ENCODE measurements at regions of chr2 and their contacts with region 1.

Region 1: DNA sequence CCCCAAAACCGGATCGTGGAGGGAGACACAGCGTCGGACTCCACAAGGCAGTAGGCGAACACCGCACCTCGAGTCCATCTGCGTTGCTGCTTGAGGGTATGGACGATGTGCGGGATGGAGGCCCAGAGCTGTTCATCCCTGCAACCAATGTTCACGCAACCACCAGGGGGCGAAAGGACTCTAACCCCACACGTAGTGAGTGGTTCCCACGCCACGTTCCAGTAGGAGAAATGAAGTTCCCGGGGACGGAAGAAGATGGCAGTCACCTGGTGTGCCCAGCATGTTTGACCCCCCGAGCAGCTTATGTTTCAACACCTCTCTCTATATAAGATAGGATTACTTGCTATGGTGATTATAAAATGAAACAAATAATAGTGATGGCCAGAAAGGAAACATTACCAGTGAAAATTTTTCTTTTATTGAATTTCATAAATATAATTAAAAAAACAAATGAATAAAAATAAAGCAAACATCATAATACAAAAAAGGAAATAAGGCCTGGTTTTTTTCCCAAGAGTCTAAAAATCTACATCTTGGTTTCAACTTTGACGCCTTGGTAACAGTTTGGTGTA is 184.3 kb downstream of the SH3BP4 start:
- DNase-seq: peak; percentile 70 to 89 (median 82)
- ATAC-seq: peak; percentile 90 to 99 (median 97)
- H3K4me3 ChIP-seq: no peak overlapping the region
- H3K27ac ChIP-seq: no peak overlapping the region
- H3K4me1 ChIP-seq: no peaks in the 10 kb centered on the region
- H3K27me3 ChIP-seq: no peaks in the 10 kb centered on the region
- CTCF ChIP-seq: peak; percentile 70 to 78 (median 72)

Region 2: DNA sequence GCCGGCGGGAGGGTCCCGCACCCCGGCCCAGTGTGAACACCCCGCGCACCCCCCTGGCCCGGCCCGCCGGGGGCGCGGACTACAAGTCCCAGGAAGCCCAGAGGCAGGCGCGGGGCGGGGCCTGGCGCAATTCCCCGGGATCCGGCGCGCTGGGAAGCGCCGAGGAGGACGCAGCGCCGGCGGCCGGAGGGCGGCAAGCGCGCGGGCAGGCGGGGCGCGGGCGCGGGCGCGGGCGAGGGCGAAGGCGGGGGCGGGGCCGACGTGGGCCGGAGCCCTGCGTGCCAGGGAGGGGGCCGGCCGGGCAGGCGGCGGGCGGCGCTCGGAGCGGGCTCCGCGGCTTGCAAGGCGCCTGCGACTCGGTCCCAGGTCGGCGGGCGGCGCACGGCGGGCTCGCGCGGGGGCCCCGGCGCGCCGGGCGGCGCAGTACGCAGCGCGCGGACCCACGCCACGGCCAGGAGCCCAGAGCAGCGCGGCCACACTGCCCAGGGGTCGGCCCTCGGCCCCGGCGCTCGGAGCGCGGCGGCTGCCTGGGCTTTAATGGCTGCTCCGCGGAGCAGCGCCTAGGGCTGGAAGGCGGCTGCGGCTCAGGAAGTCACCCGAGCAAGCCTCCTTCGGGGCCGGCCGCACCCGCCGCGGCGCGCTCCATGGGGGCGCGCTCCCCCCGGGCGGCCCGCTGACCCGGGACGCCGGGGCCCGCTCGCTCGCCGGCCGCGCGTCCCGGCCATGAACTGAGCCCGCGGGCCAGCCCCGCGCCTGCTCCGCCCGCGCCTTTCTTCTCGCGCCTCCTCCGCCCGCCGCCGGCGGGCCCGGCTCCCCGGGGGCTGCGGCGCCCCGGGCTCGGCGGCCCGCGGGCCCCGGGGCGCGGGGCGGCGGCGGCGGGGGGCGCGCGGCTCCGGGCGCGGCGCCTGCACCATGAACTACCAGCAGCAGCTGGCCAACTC is 358.0 kb after region 1 on chr2 and contains the start of gene AGAP1:
- intact Hi-C with region 1: loop called in 1 of 3 experiments (anchors 10 kb)
- DNase-seq: peak; percentile 89 to 97 (median 95)
- ATAC-seq: peak; percentile 82 to 89 (median 85)
- H3K4me3 ChIP-seq: peak within 1 kb of the TSS; percentile 53 to 67 (median 66)
- H3K27ac ChIP-seq: peak within 1 kb of the TSS; percentile 37 to 83 (median 80)
- H3K4me1 ChIP-seq: no peaks in the 10 kb centered on the region
- H3K27me3 ChIP-seq: no peaks in the 10 kb centered on the region
- CTCF ChIP-seq: no peak
- total RNA-seq, gene AGAP1: 16.1 to 27.6 (median 19.4) TPM

Region 3: DNA sequence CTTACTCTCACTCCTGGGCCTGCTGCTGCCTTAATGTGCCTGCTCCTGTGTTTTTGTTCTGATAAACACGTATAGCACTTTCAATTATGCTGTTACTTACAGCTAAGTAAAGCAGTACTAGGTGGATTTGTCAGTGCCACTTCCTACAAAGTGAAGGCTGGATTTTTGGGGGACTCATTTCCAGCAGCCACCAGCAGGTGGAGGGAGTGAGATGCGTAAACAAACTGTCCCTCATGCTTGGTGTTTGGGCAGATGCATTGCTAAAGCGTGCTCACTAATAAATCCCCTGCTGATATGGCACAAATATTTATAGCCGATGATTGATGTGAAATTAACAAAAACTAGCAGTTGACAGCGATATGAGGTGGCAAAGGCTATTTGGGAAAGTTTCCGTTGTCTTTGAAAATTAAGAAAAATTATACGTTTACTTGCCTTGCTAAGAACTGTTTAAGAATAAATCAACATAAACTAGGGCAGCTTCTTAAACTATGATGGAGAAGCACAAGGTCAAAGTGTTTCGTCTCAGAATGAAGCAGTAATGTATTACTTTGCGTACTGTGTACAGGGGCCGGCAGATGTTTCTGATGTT is 459.4 kb after region 1 on chr2:
- intact Hi-C with region 1: loop called in 2 of 3 experiments (anchors 5 to 10 kb)
- DNase-seq: peak in 4 of 6 donors; percentile 31 to 74 (median 50)
- ATAC-seq: peak; percentile 42 to 80 (median 78)
- H3K4me3 ChIP-seq: no peak overlapping the region
- H3K27ac ChIP-seq: no peak overlapping the region
- H3K4me1 ChIP-seq: no peaks in the 10 kb centered on the region
- H3K27me3 ChIP-seq: no peaks in the 10 kb centered on the region
- CTCF ChIP-seq: peak; percentile 54 to 80 (median 60)

Region 4: DNA sequence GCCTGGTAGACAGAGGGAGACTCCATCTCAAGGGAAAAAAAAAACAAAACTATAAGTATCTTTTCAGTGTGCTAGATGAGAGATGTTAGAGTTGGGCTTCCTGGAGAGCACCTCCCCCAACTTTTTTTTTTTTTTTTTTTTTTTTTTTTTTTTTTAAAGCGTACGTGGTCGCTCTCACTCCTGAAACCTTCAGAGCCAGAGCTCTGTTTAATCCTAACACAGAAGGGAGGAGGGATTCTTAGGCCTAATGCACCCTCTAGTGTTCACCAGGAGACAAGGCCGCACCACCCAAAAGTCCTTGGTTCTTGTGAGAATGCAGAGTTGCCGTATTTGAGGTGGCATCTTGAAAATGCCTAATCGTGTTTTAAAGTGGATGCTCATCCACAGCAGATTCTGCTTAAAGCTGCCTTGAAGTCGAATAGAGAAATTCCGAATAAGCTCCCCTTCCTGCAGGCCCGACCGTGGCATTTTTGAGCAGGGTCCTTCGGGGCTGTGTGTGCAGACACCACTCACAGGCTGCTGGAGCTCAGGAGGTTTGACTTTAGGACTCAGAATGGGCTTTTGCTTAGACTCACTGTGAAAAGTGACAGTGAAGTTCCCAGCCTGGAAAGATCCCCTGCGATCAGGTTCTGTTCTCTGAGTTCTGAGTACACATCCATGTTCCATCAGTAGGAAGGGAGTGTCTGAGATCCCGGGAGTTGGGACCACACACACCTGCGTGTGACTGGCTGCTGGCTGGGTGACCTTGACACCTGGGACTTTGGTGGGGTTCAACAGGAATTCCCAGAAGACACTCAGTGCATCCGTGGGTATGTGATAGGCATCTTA is 610.4 kb after region 1 on chr2:
- intact Hi-C with region 1: loop called in 2 of 3 experiments (anchors 10 kb)
- DNase-seq: peak in 4 of 6 donors; percentile 26 to 77 (median 52)
- ATAC-seq: peak; percentile 94 to 98 (median 96)
- H3K4me3 ChIP-seq: no peak overlapping the region
- H3K27ac ChIP-seq: no peak overlapping the region
- H3K4me1 ChIP-seq: no peaks in the 10 kb centered on the region
- H3K27me3 ChIP-seq: no peaks in the 10 kb centered on the region
- CTCF ChIP-seq: peak; percentile 53 to 77 (median 66)